Mammary epithelial cell (primary cell): ENCODE measurements at regions of chr4 and their contacts with region 1.

Region 1: GRCh38 chr4:7462509-7462971 is 27.8 kb upstream of the PSAPL1 start:
- DNase-seq: peak; percentile 38
- H3K4me3 ChIP-seq: no peak overlapping the region
- H3K27ac ChIP-seq: no peak overlapping the region
- H3K4me1 ChIP-seq: no peaks in the 10 kb centered on the region
- H3K27me3 ChIP-seq: no peaks in the 10 kb centered on the region
- CTCF ChIP-seq: peak in 1 of 2 donors; percentile 42

Region 2: GRCh38 chr4:7192252-7193029 is 270.1 kb before region 1 on chr4 and contains the start of gene SORCS2:
- CTCF ChIA-PET with region 1: no interaction called
- dilution Hi-C with region 1: no loop called
- in situ Hi-C with region 1: no loop called
- intact Hi-C with region 1: loop called (anchors 1 kb)
- DNase-seq: no peak
- H3K4me3 ChIP-seq: peak within 1 kb of the TSS; percentile 5 to 43 (median 35)
- H3K27ac ChIP-seq: no peak within 1 kb of the TSS
- H3K4me1 ChIP-seq: peaks cover 15% of the 10 kb centered on the region
- H3K27me3 ChIP-seq: peaks cover 12% of the 10 kb centered on the region
- CTCF ChIP-seq: peak; percentile 26 to 49
- total RNA-seq, gene SORCS2: 1.6 to 10.7 TPM

Region 3: GRCh38 chr4:7335344-7336069 is 127.0 kb before region 1 on chr4:
- CTCF ChIA-PET with region 1: no interaction called
- dilution Hi-C with region 1: no loop called
- in situ Hi-C with region 1: no loop called
- intact Hi-C with region 1: loop called (anchors 2 kb)
- DNase-seq: peak; percentile 18
- H3K4me3 ChIP-seq: no peak overlapping the region
- H3K27ac ChIP-seq: no peak overlapping the region
- H3K4me1 ChIP-seq: peaks cover 4% of the 10 kb centered on the region
- H3K27me3 ChIP-seq: no peaks in the 10 kb centered on the region
- CTCF ChIP-seq: peak; percentile 70 to 88

Region 4: DNA sequence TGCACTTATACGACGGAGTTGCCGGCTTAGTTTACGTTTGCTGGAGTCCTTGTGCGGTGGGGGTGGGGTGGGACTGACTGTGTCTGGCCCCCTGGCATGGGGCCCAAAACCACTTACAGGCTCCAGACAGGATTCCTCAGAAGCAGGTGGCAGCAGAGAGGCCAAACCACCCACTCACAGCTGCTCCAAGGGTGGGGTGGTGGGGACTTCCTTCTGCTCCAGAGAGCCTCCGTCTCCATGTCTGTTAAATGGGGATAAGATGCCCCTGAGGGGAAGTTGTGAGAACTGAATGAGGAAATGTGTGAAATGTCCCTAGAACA is 64.5 kb before region 1 on chr4:
- CTCF ChIA-PET with region 1: no interaction called
- dilution Hi-C with region 1: no loop called
- in situ Hi-C with region 1: no loop called
- intact Hi-C with region 1: loop called (anchors 10 kb)
- DNase-seq: peak; percentile 83
- H3K4me3 ChIP-seq: no peak overlapping the region
- H3K27ac ChIP-seq: peak overlapping the region; percentile 41
- H3K4me1 ChIP-seq: peaks cover 39% of the 10 kb centered on the region
- H3K27me3 ChIP-seq: no peaks in the 10 kb centered on the region
- CTCF ChIP-seq: peak in 1 of 2 donors; percentile 48

Region 5: GRCh38 chr4:7506119-7506518 is 43.6 kb after region 1 on chr4:
- CTCF ChIA-PET with region 1: no interaction called
- dilution Hi-C with region 1: loop called (anchors 5 kb)
- in situ Hi-C with region 1: no loop called
- intact Hi-C with region 1: no loop called
- DNase-seq: no peak
- H3K4me3 ChIP-seq: no peak overlapping the region
- H3K27ac ChIP-seq: no peak overlapping the region
- H3K4me1 ChIP-seq: no peaks in the 10 kb centered on the region
- H3K27me3 ChIP-seq: no peaks in the 10 kb centered on the region
- CTCF ChIP-seq: no peak

Region 6: DNA sequence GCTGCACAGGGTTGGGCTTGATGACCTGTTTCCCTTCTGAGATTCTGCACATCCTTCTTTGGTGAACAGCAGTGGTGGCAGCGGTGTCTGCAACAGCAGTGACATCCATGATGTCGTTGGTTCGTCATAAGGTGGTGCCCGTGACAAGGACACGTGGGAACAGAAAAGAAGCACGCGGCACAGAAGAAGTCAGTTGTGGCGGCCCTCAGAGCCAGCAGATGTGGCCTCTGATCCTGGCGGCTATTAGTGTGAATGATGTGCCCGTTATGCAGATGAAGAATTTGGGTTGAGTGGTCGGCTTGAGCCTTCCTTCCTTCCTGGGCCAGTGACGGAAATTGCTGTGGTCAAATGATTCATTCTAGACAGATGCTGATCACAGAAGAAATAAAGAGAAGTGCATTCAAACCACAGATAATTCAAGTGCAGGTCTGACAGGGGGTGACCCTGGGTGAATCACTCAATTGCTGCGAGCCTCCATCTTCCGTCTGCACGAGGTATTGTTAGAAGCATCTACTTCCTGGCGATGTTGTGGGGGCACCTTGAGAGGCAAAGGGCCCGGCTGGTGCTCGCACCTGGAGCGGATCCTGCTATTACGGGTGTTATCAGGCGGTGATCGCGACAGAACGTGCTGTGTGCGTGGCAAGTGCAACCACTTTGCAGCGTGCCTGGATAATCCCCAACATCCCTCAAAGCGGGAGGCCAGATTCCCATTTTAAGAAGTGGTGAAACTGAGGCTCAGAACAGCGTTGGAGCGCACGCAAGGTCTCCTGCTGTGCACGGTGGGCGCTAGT is 187.4 kb after region 1 on chr4:
- CTCF ChIA-PET with region 1: no interaction called
- dilution Hi-C with region 1: no loop called
- in situ Hi-C with region 1: no loop called
- intact Hi-C with region 1: loop called (anchors 5 kb)
- DNase-seq: peak; percentile 82
- H3K4me3 ChIP-seq: no peak overlapping the region
- H3K27ac ChIP-seq: peak overlapping the region; percentile 33
- H3K4me1 ChIP-seq: peaks cover 51% of the 10 kb centered on the region
- H3K27me3 ChIP-seq: no peaks in the 10 kb centered on the region
- CTCF ChIP-seq: no peak

Region 7: GRCh38 chr4:7719354-7720174 is 257.0 kb after region 1 on chr4:
- CTCF ChIA-PET with region 1: no interaction called
- dilution Hi-C with region 1: no loop called
- in situ Hi-C with region 1: no loop called
- intact Hi-C with region 1: loop called (anchors 1 kb)
- DNase-seq: peak; percentile 12
- H3K4me3 ChIP-seq: no peak overlapping the region
- H3K27ac ChIP-seq: no peak overlapping the region
- H3K4me1 ChIP-seq: no peaks in the 10 kb centered on the region
- H3K27me3 ChIP-seq: no peaks in the 10 kb centered on the region
- CTCF ChIP-seq: peak; percentile 68 to 86